HepG2 (cell line): ENCODE measurements at regions of chr5 and their contacts with region 1.

Region 1: GRCh38 chr5:27472000-27472763 is 433.8 kb upstream of the CDH9 start:
- DNase-seq: peak; percentile 98
- ATAC-seq: peak; percentile 100
- H3K4me3 ChIP-seq: peak overlapping the region; percentile 77 to 82 (median 78)
- H3K27ac ChIP-seq: peak overlapping the region; percentile 98
- H3K4me1 ChIP-seq: peaks cover 34% of the 10 kb centered on the region
- H3K27me3 ChIP-seq: no peaks in the 10 kb centered on the region; a peak in 1 of 5 replicates
- CTCF ChIP-seq: no peak
- EP300 ChIP-seq: 0 out of 4 replicates have a peak, but pooled peaks have one; percentile 14 to 31
- POLR2A ChIP-seq: peak; percentile 84 to 90
- RAD21 ChIP-seq: no peak

Region 2: GRCh38 chr5:27336817-27337216 is 135.4 kb before region 1 on chr5:
- CTCF ChIA-PET with region 1: no interaction called
- POLR2A ChIA-PET with region 1: no interaction called
- in situ Hi-C with region 1: no loop called
- intact Hi-C with region 1: no loop called
- DNase-seq: no peak
- ATAC-seq: no peak
- H3K4me3 ChIP-seq: no peak overlapping the region
- H3K27ac ChIP-seq: no peak overlapping the region
- H3K4me1 ChIP-seq: no peaks in the 10 kb centered on the region
- H3K27me3 ChIP-seq: no peaks in the 10 kb centered on the region
- CTCF ChIP-seq: no peak
- EP300 ChIP-seq: no peak
- POLR2A ChIP-seq: no peak
- RAD21 ChIP-seq: no peak

Region 3: GRCh38 chr5:27388755-27389154 is 83.4 kb before region 1 on chr5:
- CTCF ChIA-PET with region 1: no interaction called
- POLR2A ChIA-PET with region 1: no interaction called
- in situ Hi-C with region 1: no loop called
- intact Hi-C with region 1: loop called (anchors 2 kb)
- DNase-seq: peak; percentile 12
- ATAC-seq: peak; percentile 56
- H3K4me3 ChIP-seq: no peak overlapping the region; a peak in 1 of 6 replicates
- H3K27ac ChIP-seq: no peak overlapping the region
- H3K4me1 ChIP-seq: peaks cover 28% of the 10 kb centered on the region
- H3K27me3 ChIP-seq: no peaks in the 10 kb centered on the region
- CTCF ChIP-seq: no peak
- EP300 ChIP-seq: no peak
- POLR2A ChIP-seq: no peak
- RAD21 ChIP-seq: no peak

Region 4: DNA sequence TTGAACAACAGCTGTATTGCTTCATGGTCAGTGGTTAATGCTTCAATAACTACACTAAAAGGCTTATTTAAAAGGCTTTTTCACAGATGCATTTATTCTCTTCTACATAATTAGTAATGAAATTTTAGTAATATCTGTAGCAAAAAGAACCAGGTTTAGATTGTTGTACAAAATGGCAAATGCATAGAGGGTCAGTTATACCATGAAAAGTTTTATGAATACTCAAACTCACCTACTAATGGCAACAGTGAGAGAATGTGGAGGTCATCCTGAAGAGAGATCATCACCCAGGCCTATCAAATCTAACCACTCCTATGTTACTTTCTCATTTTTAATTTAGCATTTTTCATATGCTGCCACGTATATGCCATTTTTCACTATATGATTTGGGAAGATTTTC is 10.5 kb after region 1 on chr5:
- CTCF ChIA-PET with region 1: no interaction called
- POLR2A ChIA-PET with region 1: interaction called, 10 read pairs
- in situ Hi-C with region 1: no loop called
- intact Hi-C with region 1: no loop called
- DNase-seq: no peak
- ATAC-seq: no peak; the same call in 2 of the 3 replicates
- H3K4me3 ChIP-seq: no peak overlapping the region
- H3K27ac ChIP-seq: no peak overlapping the region
- H3K4me1 ChIP-seq: 0 out of 2 replicates have a peak, but pooled peaks cover under 1% of the 10 kb centered on the region
- H3K27me3 ChIP-seq: no peaks in the 10 kb centered on the region
- CTCF ChIP-seq: no peak
- EP300 ChIP-seq: no peak
- POLR2A ChIP-seq: no peak
- RAD21 ChIP-seq: no peak

Region 5: DNA sequence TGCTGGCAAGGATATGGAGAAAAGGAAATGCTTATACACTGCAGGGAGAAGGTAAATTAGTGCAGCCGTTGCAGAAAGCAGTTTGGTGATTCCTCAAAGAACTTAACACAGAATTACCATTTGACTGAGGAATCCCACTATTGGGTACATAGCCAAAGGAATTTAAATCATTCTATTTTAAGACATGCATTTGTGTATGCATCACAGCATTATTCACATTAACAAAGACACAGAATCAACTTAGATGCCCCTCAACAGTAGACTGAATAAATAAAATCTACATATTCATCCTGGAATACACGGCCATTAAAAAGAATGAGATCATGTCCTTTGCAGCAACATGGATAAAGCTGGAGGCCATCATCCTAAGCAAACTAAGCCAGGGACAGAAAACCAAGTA is 76.3 kb after region 1 on chr5:
- CTCF ChIA-PET with region 1: no interaction called
- POLR2A ChIA-PET with region 1: no interaction called
- in situ Hi-C with region 1: no loop called
- intact Hi-C with region 1: no loop called
- DNase-seq: no peak
- ATAC-seq: no peak
- H3K4me3 ChIP-seq: no peak overlapping the region
- H3K27ac ChIP-seq: no peak overlapping the region
- H3K4me1 ChIP-seq: no peaks in the 10 kb centered on the region
- H3K27me3 ChIP-seq: no peaks in the 10 kb centered on the region
- CTCF ChIP-seq: no peak
- EP300 ChIP-seq: no peak
- POLR2A ChIP-seq: no peak
- RAD21 ChIP-seq: no peak